ENCODE measurements at regions of chr1 and their contacts with region 1.

Region 1: GRCh38 chr1:91511386-91511785 is 10.7 kb downstream of the CDC7 start:
- DNase-seq: no peak
- H3K4me3 ChIP-seq: no peak overlapping the region
- CTCF ChIP-seq: peak; percentile 52

Region 2: GRCh38 chr1:91282695-91283420 is 228.5 kb before region 1 on chr1:
- CTCF ChIA-PET with region 1: interaction called, 12 read pairs
- POLR2A ChIA-PET with region 1: no interaction called
- DNase-seq: peak; percentile 21
- H3K4me3 ChIP-seq: no peak overlapping the region
- CTCF ChIP-seq: peak; percentile 72

Region 3: DNA sequence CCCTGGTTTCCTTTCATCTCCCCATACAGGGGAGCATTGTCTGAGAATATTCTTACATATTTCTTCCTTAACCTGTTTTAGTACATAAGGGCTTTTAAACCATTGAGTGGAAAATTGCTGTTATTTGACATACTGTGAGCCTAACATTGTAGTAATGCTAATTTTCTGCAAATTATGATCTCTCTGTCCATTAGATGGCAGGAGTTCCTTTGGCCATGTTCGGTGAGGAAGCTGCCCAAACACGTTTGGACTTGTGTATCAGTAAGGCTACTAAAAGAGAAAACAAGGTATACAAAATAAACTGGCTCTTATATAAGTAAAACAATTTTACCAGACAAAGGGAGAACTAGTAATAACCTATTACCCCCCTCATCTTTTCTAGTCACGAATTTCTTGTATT is 18.5 kb after region 1 on chr1:
- CTCF ChIA-PET with region 1: interaction called, 59 read pairs
- POLR2A ChIA-PET with region 1: no interaction called
- DNase-seq: no peak
- H3K4me3 ChIP-seq: no peak overlapping the region
- CTCF ChIP-seq: peak; percentile 25

Region 4: GRCh38 chr1:91777196-91777595 is 265.8 kb after region 1 on chr1:
- CTCF ChIA-PET with region 1: interaction called, 10 read pairs
- POLR2A ChIA-PET with region 1: no interaction called
- DNase-seq: no peak
- H3K4me3 ChIP-seq: no peak overlapping the region
- CTCF ChIP-seq: no peak

Region 5: GRCh38 chr1:91872560-91873081 is 361.2 kb after region 1 on chr1:
- CTCF ChIA-PET with region 1: interaction called, 15 read pairs
- POLR2A ChIA-PET with region 1: no interaction called
- DNase-seq: no peak
- H3K4me3 ChIP-seq: no peak overlapping the region
- CTCF ChIP-seq: no peak

Region 6: GRCh38 chr1:91929250-91929649 is 417.9 kb after region 1 on chr1:
- CTCF ChIA-PET with region 1: interaction called, 426 read pairs
- POLR2A ChIA-PET with region 1: no interaction called
- DNase-seq: no peak
- H3K4me3 ChIP-seq: no peak overlapping the region
- CTCF ChIP-seq: no peak

Region 7: GRCh38 chr1:92291372-92291999 is 780.1 kb after region 1 on chr1:
- CTCF ChIA-PET with region 1: interaction called, 53 read pairs
- POLR2A ChIA-PET with region 1: no interaction called
- DNase-seq: peak; percentile 17
- H3K4me3 ChIP-seq: no peak overlapping the region
- CTCF ChIP-seq: peak; percentile 64